HEK293 (cell line): ENCODE measurements at regions of chr14 and their contacts with region 1.

Region 1: GRCh38 chr14:21860172-21860571 is 186.6 kb upstream of the OR4E1 start:
- H3K4me3 ChIP-seq: no peak overlapping the region
- H3K27ac ChIP-seq: no peak overlapping the region
- H3K4me1 ChIP-seq: no peaks in the 10 kb centered on the region
- CTCF ChIP-seq: no peak

Region 2: GRCh38 chr14:21846227-21846885 is 13.8 kb before region 1 on chr14:
- CTCF ChIA-PET with region 1: interaction called, 22 read pairs
- POLR2A ChIA-PET with region 1: no interaction called
- H3K4me3 ChIP-seq: no peak overlapping the region
- H3K27ac ChIP-seq: no peak overlapping the region
- H3K4me1 ChIP-seq: no peaks in the 10 kb centered on the region
- CTCF ChIP-seq: peak; percentile 62; the same call in 1 of the 2 replicates